Naive thymus-derived CD4-positive, alpha-beta T cell (primary cell): ENCODE measurements at regions of chr5 and their contacts with region 1.

Region 1: DNA sequence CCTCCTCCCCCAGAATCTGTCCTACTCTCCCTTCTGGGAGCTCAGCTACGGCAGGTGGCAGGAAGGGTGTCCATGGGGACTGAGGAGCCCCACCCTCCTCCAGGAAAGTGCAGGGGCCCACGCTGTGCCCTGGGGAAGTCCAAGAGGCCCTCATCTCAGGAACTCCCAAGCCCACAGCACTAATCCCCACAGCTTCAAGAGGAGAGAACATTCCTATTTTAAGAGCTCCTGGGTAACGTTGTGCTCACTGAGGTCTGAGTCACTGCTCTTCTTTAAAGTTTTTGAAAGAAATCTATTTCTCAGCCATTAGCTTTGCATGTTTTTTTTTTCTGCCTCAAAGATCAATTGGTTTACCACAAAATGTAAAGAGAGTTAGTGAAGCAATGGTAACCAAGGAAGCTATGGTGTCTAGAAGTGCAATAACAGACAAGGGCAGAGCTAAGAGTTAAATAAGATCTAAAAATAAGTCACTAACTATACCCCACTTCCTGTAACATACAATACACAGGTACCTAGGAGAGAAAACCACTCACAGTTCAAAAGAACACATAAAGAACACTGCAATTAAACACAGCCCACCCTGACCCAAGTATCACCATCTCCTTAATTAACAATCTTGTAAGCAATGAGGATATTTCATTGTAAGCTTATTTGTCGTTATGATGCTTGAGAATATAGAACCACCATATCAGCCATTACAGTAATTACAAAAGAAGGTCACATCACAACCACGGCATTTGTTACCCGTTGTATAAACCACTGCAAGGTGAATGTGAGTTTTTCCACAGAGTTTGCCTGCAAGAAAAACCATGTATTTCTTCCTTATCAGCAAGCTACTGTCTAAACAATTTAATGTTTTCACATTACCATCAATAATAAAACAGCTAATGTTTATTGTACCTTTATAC is 382.3 kb upstream of the SLC30A5 start:
- DNase-seq: peak in 7 of 9 donors; percentile 31 to 78 (median 70)
- ATAC-seq: peak; percentile 89
- H3K4me3 ChIP-seq: peak overlapping the region; percentile 37
- H3K4me3 Mint-ChIP-seq: peak overlapping the region; percentile 6 to 85 (median 72)
- H3K27ac ChIP-seq: peak overlapping the region; percentile 34
- H3K27ac Mint-ChIP-seq: peak overlapping the region; percentile 33 to 92 (median 83)
- H3K4me1 ChIP-seq: peaks cover 21 to 29% of the 10 kb centered on the region in 2 donors
- H3K4me1 Mint-ChIP-seq: peaks cover 12 to 47% (median 28%) of the 10 kb centered on the region in 7 donors
- H3K27me3 ChIP-seq: no peaks in the 10 kb centered on the region
- H3K27me3 Mint-ChIP-seq: peaks cover 0 to 6% (median 0%) of the 10 kb centered on the region in 5 donors

Region 2: GRCh38 chr5:68279984-68280383 is 431.6 kb before region 1 on chr5:
- CTCF ChIA-PET with region 1: no interaction called
- POLR2A ChIA-PET with region 1: interaction called, 4 read pairs
- intact Hi-C with region 1: loop called (anchors 2 to 5 kb)
- DNase-seq: peak in 8 of 9 donors; percentile 32 to 84 (median 80)
- ATAC-seq: peak; percentile 94
- H3K4me3 ChIP-seq: peak overlapping the region; percentile 63
- H3K4me3 Mint-ChIP-seq: peak overlapping the region; percentile 84 to 95 (median 90)
- H3K27ac ChIP-seq: peak overlapping the region; percentile 70
- H3K27ac Mint-ChIP-seq: peak overlapping the region; percentile 94 to 98 (median 97)
- H3K4me1 ChIP-seq: peaks cover 59 to 65% of the 10 kb centered on the region in 2 donors
- H3K4me1 Mint-ChIP-seq: peaks cover 39 to 94% (median 81%) of the 10 kb centered on the region in 7 donors
- H3K27me3 ChIP-seq: no peaks in the 10 kb centered on the region
- H3K27me3 Mint-ChIP-seq: no peaks in the 10 kb centered on the region

Region 3: DNA sequence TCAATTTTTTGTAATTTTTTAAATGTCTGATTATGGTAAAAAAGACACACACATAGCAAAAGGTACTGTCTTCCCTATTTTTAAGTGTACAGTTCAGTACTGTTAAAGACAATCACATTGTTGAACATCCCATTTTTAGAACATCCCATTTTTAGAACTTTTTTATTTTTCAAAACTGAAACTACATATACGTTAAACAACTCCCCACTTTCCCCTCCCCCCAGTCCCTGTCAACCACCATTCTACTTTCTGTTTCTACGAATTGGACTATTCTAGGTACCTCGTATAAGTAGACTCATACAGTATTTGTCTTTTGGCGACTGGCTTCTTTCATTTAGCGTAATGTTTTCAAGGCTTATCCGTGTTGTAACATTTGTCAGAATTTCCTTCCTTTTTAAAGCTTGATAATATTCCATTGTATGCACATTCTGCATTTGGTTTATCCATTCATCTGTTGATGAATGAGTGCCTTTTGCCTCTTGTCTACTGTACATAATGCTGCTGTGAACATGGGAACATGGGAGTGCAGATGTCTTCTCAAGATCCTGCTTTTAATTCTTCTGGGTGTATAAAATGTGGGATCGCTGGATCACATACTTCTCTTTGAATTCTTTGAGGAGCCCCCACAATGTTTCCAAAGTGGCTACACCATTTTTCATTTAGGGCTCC is 342.0 kb before region 1 on chr5:
- CTCF ChIA-PET with region 1: no interaction called
- POLR2A ChIA-PET with region 1: no interaction called
- intact Hi-C with region 1: loop called in 1 of 2 experiments (anchors 5 kb)
- DNase-seq: peak in 7 of 9 donors; percentile 17 to 52 (median 50)
- ATAC-seq: peak; percentile 83
- H3K4me3 ChIP-seq: peak overlapping the region; percentile 26
- H3K4me3 Mint-ChIP-seq: peak overlapping the region; percentile 36 to 84 (median 76)
- H3K27ac ChIP-seq: no peak overlapping the region
- H3K27ac Mint-ChIP-seq: peak overlapping the region; percentile 23 to 91 (median 68)
- H3K4me1 ChIP-seq: peaks cover 0 to 16% of the 10 kb centered on the region in 2 donors
- H3K4me1 Mint-ChIP-seq: peaks cover 6 to 51% (median 29%) of the 10 kb centered on the region in 7 donors
- H3K27me3 ChIP-seq: no peaks in the 10 kb centered on the region
- H3K27me3 Mint-ChIP-seq: peaks cover 0 to 6% (median 0%) of the 10 kb centered on the region in 5 donors

Region 4: DNA sequence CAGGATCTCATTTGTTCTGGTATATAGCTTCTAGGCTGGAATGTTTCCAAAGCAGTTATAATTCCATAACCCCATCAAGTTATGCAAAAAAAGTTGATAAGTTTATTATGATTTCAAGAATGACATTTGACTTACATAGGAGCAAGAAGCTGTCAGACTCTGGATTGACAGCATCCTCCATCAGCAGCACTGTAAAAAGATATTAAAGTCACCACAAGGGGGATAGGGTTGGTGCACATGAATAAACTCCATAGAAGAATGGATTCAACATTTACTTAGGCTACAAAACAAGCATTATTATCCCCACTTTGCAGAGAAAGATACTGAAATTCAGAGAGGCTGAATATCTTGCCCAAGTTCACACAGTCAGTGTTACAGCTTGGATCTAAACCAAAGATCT is 173.3 kb after region 1 on chr5:
- CTCF ChIA-PET with region 1: no interaction called
- POLR2A ChIA-PET with region 1: interaction called, 5 read pairs
- intact Hi-C with region 1: loop called (anchors 2 to 5 kb)
- DNase-seq: peak in 5 of 9 donors; percentile 16 to 37 (median 27)
- ATAC-seq: peak; percentile 42
- H3K4me3 ChIP-seq: no peak overlapping the region
- H3K4me3 Mint-ChIP-seq: no peak overlapping the region
- H3K27ac ChIP-seq: no peak overlapping the region
- H3K27ac Mint-ChIP-seq: no peak overlapping the region
- H3K4me1 ChIP-seq: peaks cover 10 to 19% of the 10 kb centered on the region in 2 donors
- H3K4me1 Mint-ChIP-seq: peaks cover 13 to 54% (median 37%) of the 10 kb centered on the region in 7 donors
- H3K27me3 ChIP-seq: no peaks in the 10 kb centered on the region
- H3K27me3 Mint-ChIP-seq: peaks cover 0 to 3% (median 0%) of the 10 kb centered on the region in 5 donors